K562 (cell line): ENCODE measurements at regions of chr16 and their contacts with region 1.

Region 1: DNA sequence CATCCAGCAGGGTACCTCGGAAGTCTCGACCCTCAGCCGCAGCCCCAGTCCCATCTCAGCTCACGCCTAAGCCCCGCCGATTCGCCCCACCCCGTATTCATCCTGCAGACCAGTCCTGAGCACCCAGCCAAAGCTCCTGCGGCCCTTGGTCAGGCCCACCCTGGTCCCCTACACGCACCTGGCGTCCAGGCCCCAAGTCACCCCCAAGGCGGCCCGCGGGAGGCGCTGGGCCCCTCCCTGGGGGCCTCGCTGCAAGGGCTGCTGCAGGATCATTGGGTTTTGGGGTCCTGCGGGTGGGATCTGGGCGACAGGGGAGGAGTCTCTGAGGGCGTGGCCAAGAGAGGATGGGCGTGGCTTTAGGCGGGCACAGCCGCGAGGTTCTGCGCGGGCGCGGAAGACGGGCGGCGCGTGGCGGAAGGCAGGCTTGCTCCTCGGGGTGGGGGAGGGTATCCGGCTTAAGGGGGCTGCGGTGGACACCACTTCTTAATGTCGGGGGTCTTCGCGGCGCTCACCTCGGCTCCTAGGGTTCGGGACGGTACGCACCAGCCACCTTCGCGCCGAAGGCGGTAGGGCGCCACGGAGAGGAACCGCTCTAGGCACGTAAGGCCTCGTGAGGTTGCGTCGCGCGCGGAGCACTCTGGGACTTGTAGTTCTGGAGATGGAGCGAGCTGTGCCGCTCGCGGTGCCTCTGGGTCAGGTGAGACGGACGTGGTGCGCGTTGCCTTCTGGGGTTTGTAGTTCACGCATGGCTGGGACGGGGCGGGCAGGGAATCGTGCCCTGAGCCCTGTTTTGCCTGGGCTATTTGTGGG is at the starts of genes HCFC1R1 and THOC6:
- DNase-seq: peak; percentile 66 to 100 (median 78)
- ATAC-seq: peak; percentile 73
- H3K4me3 ChIP-seq: peak within 1 kb of the TSS; percentile 82
- H3K27ac ChIP-seq: peak within 1 kb of the TSS; percentile 90
- H3K4me1 ChIP-seq: peaks cover 25 to 87% of the 10 kb centered on the region in 2 experiments
- H3K27me3 ChIP-seq: peaks cover 0 to under 1% of the 10 kb centered on the region in 2 experiments; a peak in 2 of 5 replicates
- CTCF ChIP-seq: no peak
- EP300 ChIP-seq: no peak
- POLR2A ChIP-seq: peak; percentile 95
- RAD21 ChIP-seq: peak in 1 of 2 experiments; percentile 8; a peak in 1 of 4 replicates
- polyA plus RNA-seq, gene HCFC1R1: 2.2 to 4.1 TPM
- polyA plus RNA-seq, gene THOC6: 2.5 to 5.5 TPM

Region 2: GRCh38 chr16:2968738-2969544 is 54.9 kb before region 1 on chr16 and contains the start of gene PAQR4:
- CTCF ChIA-PET with region 1: no interaction called
- POLR2A ChIA-PET with region 1: interaction called, 5 read pairs
- in situ Hi-C with region 1: no loop called
- intact Hi-C with region 1: loop called (anchors 10 kb)
- DNase-seq: peak; percentile 84 to 95 (median 90)
- ATAC-seq: peak; percentile 77
- H3K4me3 ChIP-seq: peak within 1 kb of the TSS; percentile 96
- H3K27ac ChIP-seq: peak within 1 kb of the TSS; percentile 84
- H3K4me1 ChIP-seq: peaks cover 17 to 96% of the 10 kb centered on the region in 2 experiments
- H3K27me3 ChIP-seq: no peaks in the 10 kb centered on the region
- CTCF ChIP-seq: no peak
- EP300 ChIP-seq: 0 out of 2 replicates have a peak, but pooled peaks have one; percentile 15
- POLR2A ChIP-seq: peak; percentile 70
- RAD21 ChIP-seq: no peak
- polyA plus RNA-seq, gene PAQR4: 0.62 to 1.0 TPM

Region 3: DNA sequence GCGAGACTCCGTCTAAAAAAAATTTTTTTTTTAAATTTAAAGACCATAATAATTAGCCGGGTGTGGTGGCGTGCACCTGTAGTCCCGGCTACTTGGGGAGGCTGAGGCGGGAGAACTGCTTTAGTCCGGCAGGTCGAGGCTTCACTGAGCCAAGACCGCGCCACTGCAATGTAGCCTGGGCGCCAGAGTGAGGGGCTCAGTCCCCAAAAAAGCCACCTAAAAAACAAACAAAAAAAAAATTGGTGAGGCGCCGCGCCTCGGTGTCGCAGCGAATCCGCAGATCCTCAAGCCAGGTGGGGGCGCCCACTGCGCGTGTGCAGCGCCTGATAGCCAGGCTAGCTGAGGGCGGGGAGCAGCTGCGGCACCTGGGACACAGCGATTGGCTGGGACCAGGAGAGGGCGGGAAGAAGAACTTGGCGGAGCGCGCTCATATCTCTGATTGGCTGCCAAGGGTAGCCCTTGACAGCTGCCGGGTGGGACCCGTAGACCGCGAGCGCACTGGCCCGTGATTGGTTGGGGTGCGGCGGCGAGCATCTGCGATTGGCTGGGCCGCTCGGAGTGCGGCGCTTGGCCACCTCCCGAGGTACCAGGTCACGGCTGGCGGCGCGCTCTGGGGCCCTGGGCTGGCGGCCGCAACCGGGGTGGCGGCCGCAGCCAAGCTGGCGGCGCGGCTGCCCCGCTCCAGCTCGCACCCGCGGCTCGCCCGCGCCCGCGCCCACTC is 20.1 kb before region 1 on chr16:
- CTCF ChIA-PET with region 1: interaction called, 3 read pairs
- POLR2A ChIA-PET with region 1: interaction called, 29 read pairs
- in situ Hi-C with region 1: no loop called
- intact Hi-C with region 1: loop called (anchors 1 kb)
- DNase-seq: peak; percentile 98 to 99 (median 99)
- ATAC-seq: peak; percentile 92
- H3K4me3 ChIP-seq: peak overlapping the region; percentile 50; the same call in 1 of the 2 replicates
- H3K27ac ChIP-seq: no peak overlapping the region
- H3K4me1 ChIP-seq: peaks cover 28 to 55% of the 10 kb centered on the region in 2 experiments
- H3K27me3 ChIP-seq: no peaks in the 10 kb centered on the region
- CTCF ChIP-seq: peak; percentile 78 to 98 (median 97)
- EP300 ChIP-seq: peak; percentile 18; the same call in 1 of the 2 replicates
- POLR2A ChIP-seq: no peak
- RAD21 ChIP-seq: peak; percentile 96 to 97